ENCODE measurements at regions of chrX and their contacts with region 1.

Region 1: GRCh38 chrX:110847334-110847733 is 51.7 kb upstream of the CHRDL1 start:
- DNase-seq: no peak
- ATAC-seq: peak; percentile 44
- H3K4me3 Mint-ChIP-seq: no peak overlapping the region
- H3K27ac Mint-ChIP-seq: no peak overlapping the region
- H3K4me1 Mint-ChIP-seq: no peaks in the 10 kb centered on the region
- H3K27me3 Mint-ChIP-seq: peaks cover 2% of the 10 kb centered on the region

Region 2: DNA sequence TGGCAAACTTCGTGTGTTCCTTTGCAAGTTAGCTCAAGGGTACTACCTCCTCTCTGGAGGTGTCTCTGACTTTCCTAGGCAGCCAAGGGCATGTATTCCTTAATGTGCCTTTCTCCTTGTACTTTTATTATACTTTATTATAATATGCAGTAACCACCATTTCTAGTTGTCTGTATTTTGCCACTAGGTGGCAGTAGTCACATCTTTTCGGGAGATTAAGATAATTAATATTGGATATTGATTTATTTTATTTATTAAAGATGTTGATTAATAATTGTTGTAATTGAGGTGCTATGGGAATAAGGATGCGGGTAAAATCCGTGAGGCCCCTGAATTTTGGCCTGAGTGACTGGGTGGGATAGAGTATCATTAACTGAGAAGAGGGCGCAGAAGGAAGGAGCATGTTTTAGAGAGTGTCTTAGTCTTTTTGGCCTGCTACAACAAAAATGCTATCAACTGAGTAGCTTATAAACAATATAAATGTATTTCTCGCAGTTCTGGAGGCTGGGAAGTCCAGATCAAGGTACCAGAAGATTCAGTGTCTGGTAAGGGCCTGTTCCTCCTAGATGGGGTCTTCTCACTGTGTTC is 691.1 kb before region 1 on chrX:
- CTCF ChIA-PET with region 1: no interaction called
- POLR2A ChIA-PET with region 1: no interaction called
- intact Hi-C with region 1: loop called in 1 of 2 experiments (anchors 5 kb)
- DNase-seq: no peak
- ATAC-seq: no peak
- H3K4me3 Mint-ChIP-seq: no peak overlapping the region
- H3K27ac Mint-ChIP-seq: no peak overlapping the region
- H3K4me1 Mint-ChIP-seq: peaks cover 5% of the 10 kb centered on the region
- H3K27me3 Mint-ChIP-seq: no peaks in the 10 kb centered on the region

Region 3: GRCh38 chrX:110338915-110339314 is 508.4 kb before region 1 on chrX:
- CTCF ChIA-PET with region 1: no interaction called
- POLR2A ChIA-PET with region 1: no interaction called
- intact Hi-C with region 1: no loop called
- DNase-seq: no peak
- ATAC-seq: no peak
- H3K4me3 Mint-ChIP-seq: no peak overlapping the region
- H3K27ac Mint-ChIP-seq: no peak overlapping the region
- H3K4me1 Mint-ChIP-seq: peaks cover 1% of the 10 kb centered on the region
- H3K27me3 Mint-ChIP-seq: no peaks in the 10 kb centered on the region

Region 4: DNA sequence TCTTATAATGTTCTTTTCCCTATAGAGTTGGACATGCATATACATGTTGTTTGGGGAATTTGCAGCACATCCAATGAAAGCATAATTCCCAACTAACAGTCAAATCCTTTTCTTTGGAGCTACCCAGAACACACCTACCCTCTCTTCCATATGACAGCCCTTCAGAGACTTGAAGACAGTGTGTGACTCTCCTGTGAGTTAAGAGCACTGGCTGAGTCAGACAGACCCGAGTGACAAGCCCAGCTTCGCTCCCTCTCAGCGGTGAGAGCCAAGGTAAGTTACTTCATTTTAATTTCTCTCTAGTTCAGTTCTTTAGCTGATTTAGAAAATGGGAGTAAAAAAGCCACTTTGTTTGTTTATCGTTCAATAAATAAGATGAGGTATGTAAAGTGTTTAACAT is 402.3 kb before region 1 on chrX:
- CTCF ChIA-PET with region 1: interaction called, 11 read pairs
- POLR2A ChIA-PET with region 1: no interaction called
- intact Hi-C with region 1: loop called (anchors 1 kb)
- DNase-seq: no peak
- ATAC-seq: no peak
- H3K4me3 Mint-ChIP-seq: no peak overlapping the region
- H3K27ac Mint-ChIP-seq: no peak overlapping the region
- H3K4me1 Mint-ChIP-seq: no peaks in the 10 kb centered on the region
- H3K27me3 Mint-ChIP-seq: no peaks in the 10 kb centered on the region

Region 5: DNA sequence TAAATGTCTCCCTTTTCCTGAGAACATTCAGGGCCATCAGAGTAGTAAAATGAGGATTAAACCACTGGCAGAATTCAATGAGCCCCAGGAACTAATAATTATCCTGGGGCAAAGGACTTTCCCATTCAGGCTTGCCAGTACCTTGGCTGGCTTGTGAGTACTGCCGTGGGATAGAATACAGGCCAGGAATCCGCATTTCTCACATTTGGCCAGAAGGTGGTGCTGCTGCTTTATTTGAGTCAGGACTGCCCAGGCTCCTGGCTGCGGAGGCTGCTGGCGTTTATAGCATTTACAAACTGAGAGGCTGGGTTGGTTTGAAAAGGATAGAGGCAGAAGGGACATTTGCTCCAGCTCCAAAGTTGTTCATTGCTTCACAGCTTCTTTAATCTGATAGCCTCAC is 397.3 kb before region 1 on chrX:
- CTCF ChIA-PET with region 1: interaction called, 11 read pairs
- POLR2A ChIA-PET with region 1: no interaction called
- intact Hi-C with region 1: loop called (anchors 1 kb)
- DNase-seq: peak; percentile 71
- ATAC-seq: peak; percentile 85
- H3K4me3 Mint-ChIP-seq: no peak overlapping the region
- H3K27ac Mint-ChIP-seq: no peak overlapping the region
- H3K4me1 Mint-ChIP-seq: no peaks in the 10 kb centered on the region
- H3K27me3 Mint-ChIP-seq: no peaks in the 10 kb centered on the region

Region 6: DNA sequence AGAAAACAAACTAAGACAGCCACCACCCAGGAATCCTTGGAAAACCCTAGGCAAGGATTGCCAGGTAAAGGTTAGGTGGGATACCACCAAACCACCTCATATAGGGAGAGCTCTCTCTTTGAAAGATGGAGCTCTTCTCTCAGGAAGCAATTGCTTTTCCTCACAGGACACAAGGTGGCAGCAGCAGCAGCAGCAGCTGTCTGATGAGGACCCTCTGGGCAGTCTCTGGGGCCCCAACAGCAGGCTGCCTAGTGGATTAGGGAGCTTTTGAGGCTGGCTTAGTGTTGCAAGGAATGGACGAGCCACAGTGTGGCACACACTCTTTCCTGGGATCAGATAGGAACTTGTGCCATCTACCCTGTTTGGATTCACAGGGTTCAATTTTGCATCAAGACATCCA is 10.4 kb before region 1 on chrX:
- CTCF ChIA-PET with region 1: interaction called, 16 read pairs
- POLR2A ChIA-PET with region 1: no interaction called
- intact Hi-C with region 1: no loop called
- DNase-seq: no peak
- ATAC-seq: no peak
- H3K4me3 Mint-ChIP-seq: no peak overlapping the region
- H3K27ac Mint-ChIP-seq: no peak overlapping the region
- H3K4me1 Mint-ChIP-seq: no peaks in the 10 kb centered on the region
- H3K27me3 Mint-ChIP-seq: no peaks in the 10 kb centered on the region